ENCODE measurements at regions of chr3 and their contacts with region 1.

Region 1: DNA sequence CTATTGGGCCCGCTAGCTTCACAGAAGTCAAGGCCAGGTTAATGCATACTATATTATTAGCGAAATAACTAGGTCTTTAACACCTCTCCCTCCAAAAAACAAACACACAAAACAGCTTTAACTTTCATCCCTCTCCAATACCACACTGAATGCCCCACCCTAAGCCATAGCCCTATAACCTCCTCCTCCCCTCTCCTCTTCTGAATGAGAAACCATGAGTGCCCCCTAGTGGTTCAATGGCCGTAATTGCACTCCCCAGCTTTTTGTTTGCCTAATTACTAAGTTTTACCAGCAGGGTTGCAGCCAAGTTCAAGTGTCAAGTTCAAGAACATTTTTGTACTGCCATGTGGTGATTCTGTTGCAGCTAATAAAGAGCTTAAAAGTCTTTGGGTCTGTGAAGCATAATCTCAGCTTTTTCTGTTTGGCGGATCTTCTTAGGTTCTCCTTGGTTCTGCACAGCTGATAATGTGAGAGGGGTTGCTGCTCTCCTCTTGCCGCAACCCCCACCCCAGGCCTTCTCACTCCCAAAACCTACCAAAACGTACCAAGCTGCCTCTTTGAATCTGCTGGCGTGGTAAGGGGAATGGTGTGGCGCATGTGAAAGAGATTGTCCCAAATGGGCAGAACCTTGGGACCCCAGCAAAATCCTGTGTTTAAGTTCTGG is 57.9 kb downstream of the RPL22L1 start:
- DNase-seq: peak; percentile 76 to 90 (median 80)
- H3K4me3 ChIP-seq: no peak overlapping the region
- H3K27ac ChIP-seq: peak overlapping the region in 1 of 2 donors; percentile 68
- H3K4me1 ChIP-seq: peaks cover 16% of the 10 kb centered on the region
- H3K27me3 ChIP-seq: no peaks in the 10 kb centered on the region
- CTCF ChIP-seq: peak; percentile 84 to 97 (median 94)
- EP300 ChIP-seq: no peak
- POLR2A ChIP-seq: no peak

Region 2: DNA sequence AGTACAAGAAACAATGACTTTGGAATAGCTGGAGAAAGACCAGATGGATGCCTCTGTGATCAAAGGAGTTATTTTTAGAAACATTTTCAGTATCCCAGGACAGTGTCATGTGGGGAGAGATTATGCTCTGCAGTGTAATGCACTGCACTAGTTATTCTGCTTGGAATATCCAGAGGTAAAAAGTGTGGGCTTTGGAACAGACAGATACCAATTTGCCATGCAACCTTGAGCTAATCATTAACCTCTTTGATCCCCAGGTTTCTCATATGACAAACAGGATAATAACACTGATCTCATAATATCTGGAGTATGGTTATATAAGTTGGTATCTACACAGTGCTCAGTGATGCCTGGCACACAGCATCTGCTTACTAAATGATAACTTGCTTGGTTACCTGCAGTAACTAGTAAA is 214.0 kb before region 1 on chr3:
- intact Hi-C with region 1: no loop called
- DNase-seq: no peak
- H3K4me3 ChIP-seq: no peak overlapping the region
- H3K27ac ChIP-seq: no peak overlapping the region
- H3K4me1 ChIP-seq: no peaks in the 10 kb centered on the region
- H3K27me3 ChIP-seq: no peaks in the 10 kb centered on the region
- CTCF ChIP-seq: no peak
- EP300 ChIP-seq: no peak
- POLR2A ChIP-seq: no peak

Region 3: GRCh38 chr3:170689893-170690660 is 122.0 kb before region 1 on chr3:
- intact Hi-C with region 1: loop called in 1 of 4 experiments (anchors 10 kb)
- DNase-seq: peak; percentile 66 to 85 (median 73)
- H3K4me3 ChIP-seq: no peak overlapping the region
- H3K27ac ChIP-seq: no peak overlapping the region
- H3K4me1 ChIP-seq: peaks cover 1% of the 10 kb centered on the region
- H3K27me3 ChIP-seq: no peaks in the 10 kb centered on the region
- CTCF ChIP-seq: peak in 2 of 3 donors; percentile 36 to 61
- EP300 ChIP-seq: no peak
- POLR2A ChIP-seq: no peak

Region 4: DNA sequence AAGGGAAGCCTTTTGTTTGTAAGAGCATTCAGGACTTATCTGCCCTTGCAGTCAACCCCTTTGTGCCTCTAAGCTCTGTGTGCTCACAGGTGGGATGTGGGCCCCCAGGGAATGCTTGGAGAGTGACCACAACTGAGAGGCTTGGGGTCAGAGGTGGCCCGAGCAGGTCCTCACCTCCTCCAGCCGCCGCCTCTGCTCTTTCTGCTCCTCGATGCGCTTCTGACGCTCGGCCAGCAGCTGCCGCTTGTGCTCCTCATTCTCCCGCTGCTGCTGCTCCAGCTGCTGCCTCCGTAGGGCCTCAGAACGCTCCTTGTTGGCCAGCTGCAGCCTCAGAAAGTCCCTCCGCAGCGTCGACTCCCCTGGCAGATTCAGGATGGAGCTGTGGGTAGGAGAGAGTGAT is 345.2 kb after region 1 on chr3:
- intact Hi-C with region 1: no loop called
- DNase-seq: peak; percentile 32 to 61 (median 36)
- H3K4me3 ChIP-seq: no peak overlapping the region
- H3K27ac ChIP-seq: no peak overlapping the region
- H3K4me1 ChIP-seq: no peaks in the 10 kb centered on the region
- H3K27me3 ChIP-seq: no peaks in the 10 kb centered on the region
- CTCF ChIP-seq: no peak
- EP300 ChIP-seq: no peak
- POLR2A ChIP-seq: no peak